Breast epithelium (tissue), 4 donors: ENCODE measurements at regions of chr2 and their contacts with region 1.

Region 1: DNA sequence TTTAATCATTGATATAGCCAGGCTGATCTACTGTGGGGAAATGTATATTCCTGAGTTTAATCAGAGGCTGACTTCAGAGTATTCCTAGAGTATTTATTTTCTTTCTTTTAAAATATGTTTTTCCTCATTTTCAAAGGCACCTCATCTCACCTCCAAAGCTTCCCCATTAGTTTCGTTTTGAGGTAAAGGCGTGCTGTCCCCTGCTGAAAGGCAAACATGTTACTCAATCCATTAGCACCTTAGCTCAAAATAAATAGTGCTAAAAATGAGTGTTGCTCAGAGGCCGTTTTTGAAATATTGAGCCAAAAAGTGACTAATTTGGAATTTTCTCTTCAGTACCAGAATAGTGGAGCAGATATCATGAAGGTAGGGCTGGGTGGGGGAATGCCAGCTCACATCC is 386.2 kb downstream of the SOX11 start:
- DNase-seq: no peak
- H3K4me3 ChIP-seq: no peak overlapping the region
- H3K27ac ChIP-seq: no peak overlapping the region
- H3K4me1 ChIP-seq: no peaks in the 10 kb centered on the region
- H3K27me3 ChIP-seq: no peaks in the 10 kb centered on the region
- CTCF ChIP-seq: no peak
- POLR2A ChIP-seq: no peak

Region 2: GRCh38 chr2:5501807-5502206 is 576.6 kb before region 1 on chr2:
- intact Hi-C with region 1: no loop called
- DNase-seq: no peak
- H3K4me3 ChIP-seq: no peak overlapping the region
- H3K27ac ChIP-seq: no peak overlapping the region
- H3K4me1 ChIP-seq: no peaks in the 10 kb centered on the region
- H3K27me3 ChIP-seq: no peaks in the 10 kb centered on the region
- CTCF ChIP-seq: no peak
- POLR2A ChIP-seq: no peak

Region 3: GRCh38 chr2:6031200-6031867 is 47.1 kb before region 1 on chr2:
- intact Hi-C with region 1: loop called (anchors 2 kb)
- DNase-seq: no peak
- H3K4me3 ChIP-seq: no peak overlapping the region
- H3K27ac ChIP-seq: no peak overlapping the region
- H3K4me1 ChIP-seq: no peaks in the 10 kb centered on the region
- H3K27me3 ChIP-seq: peaks cover 0 to 4% of the 10 kb centered on the region in 2 donors
- CTCF ChIP-seq: no peak
- POLR2A ChIP-seq: no peak

Region 4: DNA sequence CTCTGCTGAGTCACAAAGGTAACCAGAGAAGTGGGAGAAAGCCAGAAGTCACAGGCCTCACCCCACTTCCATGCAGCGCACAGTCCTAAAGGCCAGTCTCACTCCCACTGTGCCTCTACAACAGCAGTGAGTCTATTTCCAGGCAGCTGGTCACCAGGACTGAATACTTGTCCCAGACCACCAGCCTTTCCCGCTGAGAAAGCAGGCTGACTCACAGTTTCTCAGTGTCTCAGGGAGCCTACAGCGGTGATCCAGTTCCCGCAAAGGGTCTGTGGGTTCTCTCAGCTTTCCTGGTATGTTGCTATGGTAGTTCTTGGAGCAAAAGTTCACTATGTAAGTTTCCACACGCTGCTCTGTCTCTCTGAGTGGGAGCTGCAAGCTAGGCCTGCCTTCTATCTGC is 1461.3 kb after region 1 on chr2:
- intact Hi-C with region 1: no loop called
- DNase-seq: no peak
- H3K4me3 ChIP-seq: no peak overlapping the region
- H3K27ac ChIP-seq: no peak overlapping the region
- H3K4me1 ChIP-seq: no peaks in the 10 kb centered on the region
- H3K27me3 ChIP-seq: no peaks in the 10 kb centered on the region
- CTCF ChIP-seq: no peak
- POLR2A ChIP-seq: no peak